Activated naive CD4-positive, alpha-beta T cell treated with anti-CD3 and anti-CD28 coated beads, Interleukin-2, amount 10 ng/mL, durations not matched to agents 7 days and 5 days (primary cell): ENCODE measurements at regions of chr6 and their contacts with region 1.

Region 1: DNA sequence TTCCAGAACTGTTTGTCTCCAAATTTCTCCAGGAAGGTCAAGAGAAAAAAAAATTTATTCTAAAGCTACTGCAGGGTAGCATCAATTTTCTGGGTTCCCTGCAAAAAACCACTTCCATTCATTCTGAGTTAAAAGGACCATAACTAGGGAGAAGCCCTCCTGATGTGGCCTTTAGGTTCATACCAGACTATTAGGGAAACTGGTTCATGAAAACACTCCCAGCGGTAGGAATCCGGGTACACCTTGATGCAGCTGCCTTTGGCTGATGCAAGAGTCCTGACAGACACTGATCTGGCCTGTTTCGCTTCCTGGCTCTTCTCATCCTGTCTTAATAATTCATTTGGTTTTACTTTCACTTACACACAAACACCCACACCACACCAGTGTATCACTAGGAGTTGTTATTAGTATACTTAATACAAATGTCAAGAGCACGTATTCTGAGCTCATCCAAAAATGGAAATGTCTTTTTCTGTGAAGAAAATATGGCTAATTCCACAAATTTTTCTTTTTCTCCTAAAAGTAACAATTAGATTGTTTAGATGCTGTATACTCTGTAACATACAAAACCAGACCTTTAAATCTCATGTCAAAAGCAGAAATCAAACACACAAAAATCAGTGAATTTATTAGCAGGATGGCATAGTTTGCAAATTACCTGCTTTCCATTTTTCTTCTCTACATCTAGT is 38.4 kb upstream of the ARHGAP18 start:
- DNase-seq: peak; percentile 73
- H3K4me3 Mint-ChIP-seq: peak overlapping the region; percentile 55
- H3K27ac Mint-ChIP-seq: peak overlapping the region; percentile 93
- H3K4me1 Mint-ChIP-seq: peaks cover 68% of the 10 kb centered on the region
- H3K27me3 Mint-ChIP-seq: no peaks in the 10 kb centered on the region

Region 2: GRCh38 chr6:129567374-129567773 is 181.0 kb before region 1 on chr6:
- CTCF ChIA-PET with region 1: no interaction called
- DNase-seq: peak; percentile 52
- H3K4me3 Mint-ChIP-seq: no peak overlapping the region
- H3K27ac Mint-ChIP-seq: no peak overlapping the region
- H3K4me1 Mint-ChIP-seq: no peaks in the 10 kb centered on the region
- H3K27me3 Mint-ChIP-seq: peaks cover 4% of the 10 kb centered on the region

Region 3: GRCh38 chr6:129730477-129731165 is 17.7 kb before region 1 on chr6:
- CTCF ChIA-PET with region 1: interaction called, 12 read pairs
- DNase-seq: peak; percentile 50
- H3K4me3 Mint-ChIP-seq: no peak overlapping the region
- H3K27ac Mint-ChIP-seq: no peak overlapping the region
- H3K4me1 Mint-ChIP-seq: peaks cover 8% of the 10 kb centered on the region
- H3K27me3 Mint-ChIP-seq: no peaks in the 10 kb centered on the region

Region 4: DNA sequence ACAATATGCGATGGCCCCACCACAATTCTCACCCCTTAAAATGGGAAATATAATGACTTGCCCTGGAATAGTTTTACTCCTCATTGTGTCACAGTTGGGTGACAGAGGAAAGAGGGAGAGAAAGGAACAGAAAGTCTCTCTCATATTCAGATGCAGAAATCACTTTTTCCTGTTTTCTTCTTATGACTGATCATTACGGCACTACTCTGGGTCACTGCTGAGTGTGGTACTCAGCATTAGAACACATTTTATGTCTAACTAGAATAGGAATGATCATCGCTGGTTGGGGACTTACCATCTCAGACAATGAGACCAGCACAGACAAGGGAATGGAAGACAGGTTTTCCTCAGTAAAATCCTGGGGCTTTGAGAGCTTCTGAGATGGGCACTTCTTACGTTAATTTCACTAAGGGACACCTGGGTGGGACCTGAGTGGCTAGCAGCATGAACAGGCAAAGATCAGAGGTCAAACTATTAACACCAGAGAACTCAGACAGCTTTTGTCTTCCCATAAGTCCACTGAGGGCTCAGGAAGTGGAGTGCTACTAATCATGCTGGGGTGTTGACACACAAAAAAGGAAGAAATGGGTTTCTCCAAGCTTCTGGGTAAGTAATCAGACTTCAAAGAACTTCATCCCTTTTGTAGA is 16.5 kb after region 1 on chr6:
- CTCF ChIA-PET with region 1: interaction called, 12 read pairs
- DNase-seq: no peak
- H3K4me3 Mint-ChIP-seq: no peak overlapping the region
- H3K27ac Mint-ChIP-seq: no peak overlapping the region
- H3K4me1 Mint-ChIP-seq: peaks cover 37% of the 10 kb centered on the region
- H3K27me3 Mint-ChIP-seq: peaks cover 45% of the 10 kb centered on the region

Region 5: DNA sequence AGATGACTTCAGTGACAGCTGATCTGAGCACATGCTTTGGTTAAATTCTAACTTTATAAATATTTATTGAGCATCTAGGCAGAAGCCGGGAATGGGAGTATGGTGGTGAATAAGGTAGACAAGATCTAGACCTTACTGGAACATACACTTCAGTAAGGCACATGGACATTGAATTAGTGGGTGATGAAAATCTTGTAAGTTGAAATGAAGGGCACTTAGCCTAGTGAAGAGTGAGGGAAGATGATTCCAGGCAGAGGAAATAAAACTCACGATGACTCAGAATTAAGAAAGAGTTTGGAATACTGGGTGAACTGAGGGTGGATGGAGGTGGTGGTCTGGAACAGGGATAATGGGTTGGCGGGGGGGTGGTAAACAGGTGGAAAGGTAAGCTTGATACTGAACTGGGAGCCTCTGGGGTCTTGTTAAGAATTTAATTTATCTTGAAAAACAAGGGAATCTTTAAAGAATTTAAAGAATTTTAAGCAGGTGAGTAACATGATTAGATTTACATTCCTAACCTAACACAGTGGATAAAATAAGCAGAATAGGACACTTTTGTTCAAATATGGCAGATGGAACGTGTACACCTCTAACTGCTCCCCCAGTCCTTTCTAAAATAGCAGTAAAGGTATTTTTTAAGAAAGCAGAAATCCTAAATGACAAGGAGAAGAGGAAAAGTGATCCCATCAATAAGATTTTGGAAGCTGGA is 36.8 kb after region 1 on chr6:
- CTCF ChIA-PET with region 1: no interaction called
- DNase-seq: no peak
- H3K4me3 Mint-ChIP-seq: no peak overlapping the region
- H3K27ac Mint-ChIP-seq: no peak overlapping the region
- H3K4me1 Mint-ChIP-seq: no peaks in the 10 kb centered on the region
- H3K27me3 Mint-ChIP-seq: peaks cover 13% of the 10 kb centered on the region